ENCODE measurements at regions of chr10 and their contacts with region 1.

Region 1: GRCh38 chr10:43689955-43690771 is 41.5 kb upstream of the ZNF32 start:
- DNase-seq: peak; percentile 92
- ATAC-seq: peak; percentile 100
- H3K4me3 Mint-ChIP-seq: peak overlapping the region; percentile 71
- H3K27ac Mint-ChIP-seq: peak overlapping the region; percentile 72
- H3K4me1 Mint-ChIP-seq: peaks cover 2% of the 10 kb centered on the region
- H3K27me3 Mint-ChIP-seq: peaks cover 24% of the 10 kb centered on the region

Region 2: GRCh38 chr10:43655311-43655710 is 34.9 kb before region 1 on chr10:
- CTCF ChIA-PET with region 1: no interaction called
- POLR2A ChIA-PET with region 1: no interaction called
- intact Hi-C with region 1: no loop called
- DNase-seq: no peak
- ATAC-seq: no peak
- H3K4me3 Mint-ChIP-seq: no peak overlapping the region
- H3K27ac Mint-ChIP-seq: no peak overlapping the region
- H3K4me1 Mint-ChIP-seq: no peaks in the 10 kb centered on the region
- H3K27me3 Mint-ChIP-seq: peaks cover 8% of the 10 kb centered on the region

Region 3: DNA sequence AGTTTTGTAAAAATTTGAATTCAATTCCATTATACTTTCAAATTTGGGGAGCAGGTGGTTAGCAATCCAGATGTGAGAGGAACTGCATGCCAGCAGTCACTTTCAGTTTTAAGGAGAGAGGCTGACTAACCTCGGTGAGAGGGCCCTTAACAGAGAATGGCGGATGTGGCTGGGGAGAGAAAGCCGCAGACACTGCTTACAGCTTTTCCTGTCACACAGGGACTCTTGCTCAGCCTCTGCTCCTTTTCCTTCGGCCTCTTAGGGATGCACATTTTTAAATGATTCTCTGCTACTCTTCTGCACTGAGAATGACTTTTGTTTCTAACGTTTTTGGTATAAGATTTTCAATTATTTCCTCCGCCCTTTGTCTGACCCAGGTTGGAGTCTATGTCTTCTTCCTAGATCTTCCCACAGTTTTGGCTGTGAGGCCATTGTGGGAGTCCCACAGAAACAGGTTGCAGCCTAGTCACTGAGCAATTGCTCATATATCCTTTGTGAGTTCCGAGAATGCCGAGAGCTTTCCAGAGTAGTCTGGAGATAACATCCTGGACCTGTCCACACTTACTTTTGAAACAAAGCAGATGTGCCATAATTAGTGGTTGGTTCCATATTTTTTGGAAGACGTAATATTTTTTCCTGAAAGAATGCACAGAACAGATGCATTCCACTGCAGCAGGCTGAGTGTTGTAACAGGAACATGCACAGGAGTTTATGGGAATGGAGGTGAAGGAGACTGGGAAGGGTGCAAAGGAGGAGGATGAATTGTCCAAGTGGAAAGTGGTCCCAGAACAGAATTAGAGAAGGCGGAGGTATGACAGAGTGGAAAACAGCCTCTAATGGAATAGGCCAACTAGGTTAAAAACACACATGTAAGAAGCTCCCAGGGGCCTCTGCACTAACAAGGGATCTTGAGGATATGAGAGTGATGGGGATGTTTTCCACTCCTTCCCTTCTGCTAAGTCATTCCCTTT is 126.5 kb after region 1 on chr10:
- CTCF ChIA-PET with region 1: interaction called, 4 read pairs
- POLR2A ChIA-PET with region 1: no interaction called
- intact Hi-C with region 1: loop called in 1 of 2 experiments (anchors 1 kb)
- DNase-seq: peak; percentile 90
- ATAC-seq: peak; percentile 95
- H3K4me3 Mint-ChIP-seq: peak overlapping the region; percentile 16
- H3K27ac Mint-ChIP-seq: peak overlapping the region; percentile 80
- H3K4me1 Mint-ChIP-seq: peaks cover 41% of the 10 kb centered on the region
- H3K27me3 Mint-ChIP-seq: no peaks in the 10 kb centered on the region

Region 4: GRCh38 chr10:44030143-44030542 is 340.0 kb after region 1 on chr10:
- CTCF ChIA-PET with region 1: interaction called, 7 read pairs
- POLR2A ChIA-PET with region 1: no interaction called
- intact Hi-C with region 1: loop called (anchors 1 kb)
- DNase-seq: peak; percentile 58
- ATAC-seq: peak; percentile 76
- H3K4me3 Mint-ChIP-seq: no peak overlapping the region
- H3K27ac Mint-ChIP-seq: no peak overlapping the region
- H3K4me1 Mint-ChIP-seq: peaks cover 2% of the 10 kb centered on the region
- H3K27me3 Mint-ChIP-seq: no peaks in the 10 kb centered on the region

Region 5: GRCh38 chr10:44310762-44311562 is 620.8 kb after region 1 on chr10:
- CTCF ChIA-PET with region 1: no interaction called
- POLR2A ChIA-PET with region 1: no interaction called
- intact Hi-C with region 1: loop called (anchors 1 to 5 kb)
- DNase-seq: peak; percentile 85
- ATAC-seq: peak; percentile 98
- H3K4me3 Mint-ChIP-seq: no peak overlapping the region
- H3K27ac Mint-ChIP-seq: no peak overlapping the region
- H3K4me1 Mint-ChIP-seq: peaks cover 5% of the 10 kb centered on the region
- H3K27me3 Mint-ChIP-seq: peaks cover 18% of the 10 kb centered on the region

Region 6: GRCh38 chr10:44386546-44387052 is 696.4 kb after region 1 on chr10:
- CTCF ChIA-PET with region 1: interaction called, 6 read pairs
- POLR2A ChIA-PET with region 1: no interaction called
- intact Hi-C with region 1: loop called (anchors 1 to 5 kb)
- DNase-seq: peak; percentile 61
- ATAC-seq: peak; percentile 74
- H3K4me3 Mint-ChIP-seq: no peak overlapping the region
- H3K27ac Mint-ChIP-seq: no peak overlapping the region
- H3K4me1 Mint-ChIP-seq: peaks cover 3% of the 10 kb centered on the region
- H3K27me3 Mint-ChIP-seq: peaks cover 31% of the 10 kb centered on the region

Region 7: GRCh38 chr10:44864637-44865288 is 1174.6 kb after region 1 on chr10:
- CTCF ChIA-PET with region 1: interaction called, 5 read pairs
- POLR2A ChIA-PET with region 1: no interaction called
- intact Hi-C with region 1: loop called in 1 of 2 experiments (anchors 5 kb)
- DNase-seq: peak; percentile 92
- ATAC-seq: peak; percentile 92
- H3K4me3 Mint-ChIP-seq: peak overlapping the region; percentile 79
- H3K27ac Mint-ChIP-seq: peak overlapping the region; percentile 52
- H3K4me1 Mint-ChIP-seq: peaks cover 17% of the 10 kb centered on the region
- H3K27me3 Mint-ChIP-seq: peaks cover 54% of the 10 kb centered on the region